A549 (cell line): ENCODE measurements at regions of chrX and their contacts with region 1.

Region 1: GRCh38 chrX:69144838-69145680 is 20.2 kb downstream of the PJA1 start:
- DNase-seq: no peak
- ATAC-seq: no peak
- H3K4me3 ChIP-seq: no peak overlapping the region
- H3K27ac ChIP-seq: no peak overlapping the region
- H3K4me1 ChIP-seq: no peaks in the 10 kb centered on the region; the same call in 2 of the 3 replicates
- CTCF ChIP-seq: no peak
- EP300 ChIP-seq: no peak
- POLR2A ChIP-seq: no peak
- RAD21 ChIP-seq: no peak

Region 2: GRCh38 chrX:69133921-69134542 is 11.0 kb before region 1 on chrX:
- CTCF ChIA-PET with region 1: interaction called, 6 read pairs
- POLR2A ChIA-PET with region 1: interaction called, 10 read pairs
- DNase-seq: peak; percentile 58 to 78
- ATAC-seq: peak; percentile 94 to 100
- H3K4me3 ChIP-seq: no peak overlapping the region
- H3K27ac ChIP-seq: no peak overlapping the region
- H3K4me1 ChIP-seq: no peaks in the 10 kb centered on the region
- CTCF ChIP-seq: peak; percentile 51
- EP300 ChIP-seq: no peak
- POLR2A ChIP-seq: no peak
- RAD21 ChIP-seq: peak; percentile 41 to 53